ENCODE measurements at regions of chrX and their contacts with region 1.

Region 1: GRCh38 chrX:51144852-51145442 is 187.7 kb upstream of the NUDT10 start:
- DNase-seq: no peak
- H3K4me3 ChIP-seq: no peak overlapping the region
- H3K27ac ChIP-seq: no peak overlapping the region
- H3K4me1 ChIP-seq: no peaks in the 10 kb centered on the region
- H3K27me3 ChIP-seq: no peaks in the 10 kb centered on the region
- CTCF ChIP-seq: peak in 2 of 4 experiments; percentile 10 to 44
- EP300 ChIP-seq: no peak
- POLR2A ChIP-seq: no peak

Region 2: GRCh38 chrX:51420610-51421009 is 275.7 kb after region 1 on chrX:
- intact Hi-C with region 1: loop called (anchors 10 kb)
- DNase-seq: no peak
- H3K4me3 ChIP-seq: no peak overlapping the region
- H3K27ac ChIP-seq: no peak overlapping the region
- H3K4me1 ChIP-seq: no peaks in the 10 kb centered on the region
- H3K27me3 ChIP-seq: no peaks in the 10 kb centered on the region
- CTCF ChIP-seq: peak in 3 of 4 experiments; percentile 27 to 51 (median 28)
- EP300 ChIP-seq: no peak
- POLR2A ChIP-seq: no peak

Region 3: GRCh38 chrX:51461053-51462044 is 316.4 kb after region 1 on chrX:
- intact Hi-C with region 1: loop called (anchors 10 kb)
- DNase-seq: no peak
- H3K4me3 ChIP-seq: no peak overlapping the region
- H3K27ac ChIP-seq: no peak overlapping the region
- H3K4me1 ChIP-seq: no peaks in the 10 kb centered on the region
- H3K27me3 ChIP-seq: no peaks in the 10 kb centered on the region
- CTCF ChIP-seq: peak; percentile 12 to 64 (median 39)
- EP300 ChIP-seq: no peak
- POLR2A ChIP-seq: no peak